ENCODE measurements at regions of chr16 and their contacts with region 1.

Region 1: GRCh38 chr16:13733546-13733945 is 186.4 kb upstream of the ERCC4 start:
- DNase-seq: no peak

Region 2: DNA sequence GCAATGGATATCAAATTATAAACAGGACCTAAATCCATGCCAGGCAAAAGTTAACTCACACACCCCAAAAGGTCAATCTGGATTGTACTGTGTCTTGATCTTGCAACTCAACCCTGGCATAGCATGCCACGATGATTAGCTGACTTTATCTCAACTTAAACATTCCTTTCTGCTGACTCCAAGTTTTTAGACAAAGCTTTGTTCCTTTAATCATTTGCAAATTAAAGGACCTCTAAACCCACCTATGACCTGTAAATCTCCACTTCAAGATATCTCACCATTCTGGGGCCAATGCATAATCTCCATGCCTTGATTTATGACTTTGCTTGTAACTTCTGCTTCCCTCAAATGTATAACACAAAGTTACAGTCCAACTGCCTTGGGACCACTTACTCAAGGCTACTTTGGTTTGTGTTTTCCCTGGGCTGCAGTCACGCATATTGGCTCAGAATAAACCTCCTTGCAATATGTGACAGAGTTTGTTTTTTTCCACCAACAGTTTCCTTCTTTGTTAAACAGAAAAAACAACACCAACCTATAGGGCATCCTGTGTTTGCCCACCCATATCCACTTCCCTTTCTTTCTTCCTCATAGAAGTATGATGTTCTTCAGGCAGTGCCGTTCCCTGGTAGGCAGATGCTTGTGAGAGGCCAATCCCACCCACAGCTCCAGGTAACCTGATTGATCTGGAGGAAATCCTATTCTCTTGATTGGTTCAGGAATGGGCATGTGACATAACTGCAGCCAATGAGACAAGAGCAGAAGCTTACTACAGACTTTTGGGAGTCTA is 204.2 kb before region 1 on chr16:
- intact Hi-C with region 1: no loop called
- DNase-seq: no peak

Region 3: GRCh38 chr16:13708347-13709120 is 25.0 kb before region 1 on chr16:
- intact Hi-C with region 1: no loop called
- DNase-seq: no peak

Region 4: GRCh38 chr16:14202697-14203096 is 469.2 kb after region 1 on chr16:
- intact Hi-C with region 1: loop called in 1 of 2 experiments (anchors 5 kb)
- DNase-seq: no peak